ENCODE measurements at regions of chr5 and their contacts with region 1.

Region 1: DNA sequence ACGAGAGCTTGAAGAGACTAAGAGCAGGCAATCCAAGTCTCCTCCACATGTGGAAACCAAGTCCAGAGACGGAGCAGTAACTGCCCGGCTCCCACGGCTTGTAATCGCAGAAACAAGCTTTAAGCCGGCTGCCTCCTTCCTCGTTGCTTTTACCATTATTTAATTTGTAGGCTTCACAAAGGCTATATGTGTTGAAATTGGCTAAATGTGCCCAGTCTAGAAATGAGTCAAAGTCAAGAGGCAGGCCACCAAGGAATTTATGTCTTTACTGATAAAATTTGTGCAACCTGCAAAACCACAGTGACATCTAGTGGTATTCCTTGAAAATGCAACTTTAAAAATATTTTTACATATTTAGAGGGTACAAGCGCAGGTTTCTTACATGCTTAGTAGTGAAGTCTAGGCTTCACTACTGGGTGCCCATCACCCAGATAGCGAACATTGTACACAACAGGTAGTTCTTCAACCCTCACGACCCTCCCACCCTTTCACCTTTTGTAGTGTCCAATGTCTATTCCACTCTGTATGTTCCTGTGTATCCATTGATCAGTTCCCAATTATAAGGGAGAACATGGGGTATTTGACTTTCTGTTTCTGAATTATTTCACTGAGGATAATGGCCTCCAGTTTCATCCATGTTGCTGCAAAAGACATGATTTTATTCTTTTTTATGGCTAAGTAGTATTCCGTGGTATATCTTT is 33.5 kb upstream of the EBF1 start:
- DNase-seq: no peak
- ATAC-seq: no peak
- H3K4me3 Mint-ChIP-seq: no peak overlapping the region
- H3K27ac Mint-ChIP-seq: no peak overlapping the region
- H3K4me1 Mint-ChIP-seq: no peaks in the 10 kb centered on the region
- H3K27me3 Mint-ChIP-seq: peaks cover 3% of the 10 kb centered on the region

Region 2: DNA sequence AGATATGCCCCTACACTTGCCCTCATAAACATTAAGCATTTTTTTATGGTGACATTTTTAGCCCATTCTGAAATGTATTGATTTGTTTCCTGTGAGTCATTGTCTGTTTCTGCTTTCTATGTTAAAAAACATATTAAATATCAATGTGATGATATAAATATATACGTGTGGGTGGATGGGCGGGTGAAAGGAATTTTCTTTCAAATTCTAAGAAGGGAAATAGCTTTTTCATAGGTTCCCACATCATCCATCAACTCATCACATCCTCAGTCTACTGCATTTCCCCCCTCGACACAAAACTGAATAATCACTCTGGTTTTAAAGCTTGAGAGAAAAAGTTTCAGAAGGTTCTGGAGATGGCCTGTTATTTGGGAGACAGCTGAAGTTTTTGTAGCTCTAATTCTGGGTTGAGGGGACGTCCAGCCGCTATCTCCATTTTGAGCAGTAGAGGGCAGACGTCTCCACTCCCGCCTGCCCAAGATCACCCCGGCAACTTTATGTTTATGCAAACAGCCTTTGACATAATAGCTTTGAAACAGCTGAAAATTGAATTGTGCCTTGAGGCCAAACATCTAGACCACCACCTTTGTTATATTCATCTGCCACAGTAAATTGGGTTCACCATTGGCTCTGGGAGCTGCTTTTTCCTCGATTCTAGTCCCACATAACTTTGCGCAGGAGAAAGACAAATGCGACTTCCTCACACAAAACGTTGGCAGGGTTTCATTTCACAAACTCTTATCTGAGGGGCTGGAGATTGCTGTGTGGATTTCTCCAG is 1058.0 kb before region 1 on chr5:
- CTCF ChIA-PET with region 1: interaction called, 11 read pairs
- POLR2A ChIA-PET with region 1: no interaction called
- intact Hi-C with region 1: loop called in 1 of 2 experiments (anchors 1 kb)
- DNase-seq: peak; percentile 70
- ATAC-seq: peak; percentile 78
- H3K4me3 Mint-ChIP-seq: no peak overlapping the region
- H3K27ac Mint-ChIP-seq: no peak overlapping the region
- H3K4me1 Mint-ChIP-seq: peaks cover 5% of the 10 kb centered on the region
- H3K27me3 Mint-ChIP-seq: peaks cover 2% of the 10 kb centered on the region

Region 3: GRCh38 chr5:158174918-158175851 is 958.0 kb before region 1 on chr5:
- CTCF ChIA-PET with region 1: interaction called, 6 read pairs
- POLR2A ChIA-PET with region 1: no interaction called
- intact Hi-C with region 1: loop called (anchors 1 kb)
- DNase-seq: peak; percentile 75
- ATAC-seq: peak; percentile 61
- H3K4me3 Mint-ChIP-seq: no peak overlapping the region
- H3K27ac Mint-ChIP-seq: no peak overlapping the region
- H3K4me1 Mint-ChIP-seq: no peaks in the 10 kb centered on the region
- H3K27me3 Mint-ChIP-seq: no peaks in the 10 kb centered on the region

Region 4: DNA sequence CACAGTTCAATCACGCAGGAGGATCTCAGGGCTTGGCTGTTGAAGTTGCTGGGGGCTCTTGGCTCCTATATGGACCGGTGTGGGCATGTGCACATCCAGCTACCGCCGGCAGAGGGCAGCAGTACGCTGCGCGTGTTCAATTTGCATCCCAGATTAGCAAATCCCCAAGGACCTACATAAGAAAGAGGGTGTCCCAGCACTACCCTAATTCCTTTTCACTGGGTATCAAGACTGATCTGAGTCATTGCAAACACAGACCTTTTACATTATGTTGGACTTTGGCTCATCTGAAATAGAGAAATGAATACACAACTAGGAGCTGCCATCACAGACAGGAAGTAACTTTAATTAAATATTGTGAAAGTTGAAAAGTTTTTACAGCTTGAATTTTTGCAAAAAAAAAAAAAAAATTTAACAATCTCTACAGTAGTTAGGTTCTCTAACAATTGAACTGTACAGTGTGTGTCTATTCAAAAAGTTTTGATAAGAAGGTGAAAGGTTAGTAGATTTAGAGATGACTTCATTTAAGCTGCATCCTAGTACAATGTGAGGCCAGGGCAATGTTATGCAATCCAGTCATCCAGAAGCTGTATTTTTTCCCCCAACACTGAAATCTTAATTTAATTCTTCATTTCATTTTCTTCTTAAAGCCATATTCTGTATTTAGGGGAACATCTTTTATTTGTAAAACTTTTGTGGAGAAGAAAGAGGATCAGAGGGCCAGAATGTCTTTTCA is 437.4 kb before region 1 on chr5:
- CTCF ChIA-PET with region 1: interaction called, 19 read pairs
- POLR2A ChIA-PET with region 1: interaction called, 3 read pairs
- intact Hi-C with region 1: loop called (anchors 1 kb)
- DNase-seq: peak; percentile 80
- ATAC-seq: peak; percentile 74
- H3K4me3 Mint-ChIP-seq: no peak overlapping the region
- H3K27ac Mint-ChIP-seq: no peak overlapping the region
- H3K4me1 Mint-ChIP-seq: peaks cover 2% of the 10 kb centered on the region
- H3K27me3 Mint-ChIP-seq: no peaks in the 10 kb centered on the region

Region 5: DNA sequence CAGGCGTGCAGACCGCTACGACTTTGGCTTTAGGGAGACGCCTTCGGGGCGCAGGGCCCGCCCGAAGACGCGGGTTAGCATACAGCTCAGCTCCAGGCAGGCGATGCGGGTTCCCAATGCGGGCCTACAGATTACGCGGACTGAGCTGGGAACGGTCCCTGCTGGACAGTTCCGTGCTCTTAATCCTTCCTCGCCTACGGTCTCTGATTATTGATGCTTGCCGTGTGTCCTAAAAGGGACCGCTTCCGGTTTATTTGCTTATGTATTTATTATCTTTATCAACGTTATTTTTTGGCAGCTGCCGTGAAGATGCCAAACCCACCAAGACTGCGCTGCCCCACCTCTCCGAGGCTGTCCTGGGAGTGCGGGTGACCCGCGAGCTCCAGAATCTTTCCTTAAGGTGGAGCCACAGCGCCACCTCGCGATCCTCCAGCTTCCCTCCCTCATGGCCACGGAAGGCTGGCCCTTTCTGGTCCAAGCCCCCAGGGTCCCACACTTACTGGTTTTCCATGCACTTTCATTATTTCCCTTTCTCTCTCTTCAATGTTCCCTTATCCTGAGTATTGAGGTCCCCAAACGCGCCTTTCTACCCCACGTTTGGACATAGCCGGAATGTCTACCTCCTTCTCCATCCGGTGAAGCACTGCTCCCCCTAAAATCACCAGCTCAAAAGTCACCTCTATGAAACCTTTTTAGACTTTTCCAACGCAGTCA is 26.5 kb before region 1 on chr5:
- CTCF ChIA-PET with region 1: interaction called, 23 read pairs
- POLR2A ChIA-PET with region 1: no interaction called
- intact Hi-C with region 1: loop called (anchors 2 kb)
- DNase-seq: peak; percentile 85
- ATAC-seq: peak; percentile 80
- H3K4me3 Mint-ChIP-seq: peak overlapping the region; percentile 59
- H3K27ac Mint-ChIP-seq: no peak overlapping the region
- H3K4me1 Mint-ChIP-seq: peaks cover 24% of the 10 kb centered on the region
- H3K27me3 Mint-ChIP-seq: peaks cover 56% of the 10 kb centered on the region

Region 6: DNA sequence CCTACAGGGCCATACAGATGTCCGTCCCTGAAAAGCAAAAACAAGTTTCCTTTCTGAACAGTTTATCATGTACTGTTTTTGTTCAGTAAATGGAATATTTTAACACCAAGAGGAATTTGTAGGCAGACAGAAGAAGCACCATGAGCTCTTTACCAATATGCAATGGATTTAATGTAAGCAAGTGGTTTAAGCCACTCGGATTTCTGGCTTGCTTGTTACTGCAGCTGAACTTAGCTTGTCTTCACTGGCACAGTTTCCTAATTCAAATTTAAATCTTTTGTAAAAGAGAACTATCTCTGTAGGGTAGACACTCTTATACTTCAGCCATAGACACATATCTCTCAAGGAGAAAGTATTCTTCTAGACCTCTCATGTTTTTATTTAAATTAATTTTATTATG is 20.8 kb before region 1 on chr5:
- CTCF ChIA-PET with region 1: interaction called, 23 read pairs
- POLR2A ChIA-PET with region 1: no interaction called
- intact Hi-C with region 1: loop called (anchors 2 kb)
- DNase-seq: no peak
- ATAC-seq: no peak
- H3K4me3 Mint-ChIP-seq: no peak overlapping the region
- H3K27ac Mint-ChIP-seq: no peak overlapping the region
- H3K4me1 Mint-ChIP-seq: no peaks in the 10 kb centered on the region
- H3K27me3 Mint-ChIP-seq: peaks cover 17% of the 10 kb centered on the region

Region 7: GRCh38 chr5:159120446-159120845 is 12.7 kb before region 1 on chr5:
- CTCF ChIA-PET with region 1: interaction called, 11 read pairs
- POLR2A ChIA-PET with region 1: no interaction called
- intact Hi-C with region 1: no loop called
- DNase-seq: no peak
- ATAC-seq: peak; percentile 83
- H3K4me3 Mint-ChIP-seq: peak overlapping the region; percentile 42
- H3K27ac Mint-ChIP-seq: peak overlapping the region; percentile 95
- H3K4me1 Mint-ChIP-seq: peaks cover 22% of the 10 kb centered on the region
- H3K27me3 Mint-ChIP-seq: no peaks in the 10 kb centered on the region

Region 8: DNA sequence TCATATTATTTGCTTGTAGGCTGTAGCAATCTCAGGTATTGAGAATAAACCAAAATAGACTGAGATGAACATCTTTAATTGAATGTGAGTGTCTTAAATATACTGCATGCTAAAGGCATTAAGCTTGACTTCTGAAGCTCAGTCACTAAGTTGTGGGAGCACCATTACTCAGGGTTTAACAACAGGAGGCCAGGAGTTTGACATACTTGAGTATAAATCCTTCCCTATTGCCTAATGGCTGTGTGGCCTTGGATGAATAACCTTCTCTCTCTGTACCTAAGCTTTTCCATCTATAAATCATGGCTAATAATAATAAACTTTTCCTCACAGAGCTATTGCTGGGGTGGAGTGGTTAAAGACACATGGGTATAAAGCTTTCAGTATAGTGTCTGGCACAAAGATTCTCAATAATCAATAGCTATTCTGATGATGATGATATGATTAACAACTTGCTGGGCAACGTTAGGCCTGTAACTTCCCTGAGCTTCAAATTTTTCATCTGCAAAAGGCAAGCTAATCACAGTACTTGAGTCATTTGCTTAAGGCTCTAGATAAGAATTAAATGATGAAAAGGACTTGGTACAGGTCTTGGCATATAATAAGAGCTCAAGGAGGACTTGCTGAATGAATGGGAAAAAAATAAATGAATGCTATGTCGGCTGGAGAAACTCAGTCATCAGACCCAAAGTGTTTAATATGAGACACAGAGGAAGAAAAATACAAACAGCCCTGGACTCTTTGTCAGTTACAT is 371.1 kb after region 1 on chr5:
- CTCF ChIA-PET with region 1: no interaction called
- POLR2A ChIA-PET with region 1: no interaction called
- intact Hi-C with region 1: no loop called
- DNase-seq: no peak
- ATAC-seq: no peak
- H3K4me3 Mint-ChIP-seq: no peak overlapping the region
- H3K27ac Mint-ChIP-seq: no peak overlapping the region
- H3K4me1 Mint-ChIP-seq: no peaks in the 10 kb centered on the region
- H3K27me3 Mint-ChIP-seq: peaks cover 3% of the 10 kb centered on the region

Region 9: GRCh38 chr5:160278343-160278955 is 1145.3 kb after region 1 on chr5:
- CTCF ChIA-PET with region 1: no interaction called
- POLR2A ChIA-PET with region 1: no interaction called
- intact Hi-C with region 1: no loop called
- DNase-seq: no peak
- ATAC-seq: no peak
- H3K4me3 Mint-ChIP-seq: no peak overlapping the region
- H3K27ac Mint-ChIP-seq: no peak overlapping the region
- H3K4me1 Mint-ChIP-seq: no peaks in the 10 kb centered on the region
- H3K27me3 Mint-ChIP-seq: no peaks in the 10 kb centered on the region

Measured in activated CD4-positive, alpha-beta T cell treated with anti-CD3 and anti-CD28 coated beads for 36 hours (primary cell).